ENCODE measurements at regions of chr3 and their contacts with region 1.

Region 1: DNA sequence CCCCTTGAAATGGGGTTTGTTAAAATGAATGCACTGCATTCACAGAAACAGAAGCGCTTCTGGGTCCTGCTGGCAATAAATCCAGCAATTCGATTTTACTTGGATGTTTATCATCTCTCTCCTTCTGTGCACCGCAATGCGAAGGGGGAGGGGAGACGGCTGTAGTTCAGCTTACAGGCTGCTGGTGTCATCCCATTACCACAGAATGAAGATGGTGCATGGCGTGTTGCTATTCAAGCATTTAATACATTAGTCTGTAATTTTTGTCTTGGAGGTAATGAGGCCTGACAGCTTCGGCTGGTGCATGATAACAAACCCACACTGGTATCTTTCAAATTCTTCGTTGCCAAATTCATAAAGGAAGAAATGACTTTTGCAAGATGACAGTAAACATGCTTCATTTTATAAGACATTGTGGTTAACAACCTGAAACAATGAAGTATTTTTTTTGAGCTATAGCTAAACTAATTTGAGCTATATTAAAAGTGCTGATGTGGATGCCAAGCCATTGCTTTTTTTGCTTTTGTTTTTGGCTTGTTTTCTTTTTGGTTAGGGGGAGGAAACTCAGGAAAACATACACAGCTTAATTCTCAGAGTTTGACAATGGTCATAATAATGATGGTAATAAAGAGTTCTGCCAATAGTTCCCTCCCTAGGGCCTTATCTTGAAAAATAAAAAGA is 418.3 kb downstream of the OTOL1 start:
- DNase-seq: peak; percentile 77
- ATAC-seq: peak; percentile 82
- H3K4me3 ChIP-seq: peak overlapping the region; percentile 27; the same call in 1 of the 2 replicates
- H3K27ac ChIP-seq: peak overlapping the region; percentile 74
- H3K4me1 ChIP-seq: peaks cover 30% of the 10 kb centered on the region
- H3K27me3 ChIP-seq: no peaks in the 10 kb centered on the region
- CTCF ChIP-seq: peak; percentile 79

Region 2: DNA sequence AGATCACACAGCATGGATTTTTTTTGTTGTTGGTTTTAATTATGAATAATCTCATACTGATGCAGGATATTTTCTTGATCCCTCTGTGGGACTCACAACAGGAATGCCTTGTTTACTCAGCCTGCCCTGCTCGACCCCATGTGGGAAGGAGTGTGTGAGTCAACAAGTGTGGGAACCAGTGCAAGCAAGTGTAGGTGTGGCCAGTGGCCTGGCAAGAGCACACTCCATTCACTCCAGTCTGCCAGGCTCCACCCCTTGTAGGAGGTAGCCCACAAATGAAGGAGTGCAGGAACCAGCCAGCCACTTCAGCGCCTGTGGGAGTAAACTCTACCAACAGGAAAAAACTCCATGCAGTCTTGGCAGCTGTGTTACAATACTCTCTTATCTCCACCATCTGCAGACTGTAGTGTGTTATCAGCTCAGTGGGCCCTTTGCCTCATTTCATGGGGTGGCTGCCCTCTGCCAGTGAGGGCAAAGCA is 24.7 kb before region 1 on chr3:
- CTCF ChIA-PET with region 1: no interaction called
- POLR2A ChIA-PET with region 1: no interaction called
- intact Hi-C with region 1: loop called (anchors 1 kb)
- DNase-seq: peak; percentile 98
- ATAC-seq: peak; percentile 100
- H3K4me3 ChIP-seq: no peak overlapping the region
- H3K27ac ChIP-seq: peak overlapping the region; percentile 92
- H3K4me1 ChIP-seq: peaks cover 25% of the 10 kb centered on the region
- H3K27me3 ChIP-seq: no peaks in the 10 kb centered on the region
- CTCF ChIP-seq: no peak

Region 3: GRCh38 chr3:161991901-161992540 is 77.1 kb after region 1 on chr3:
- CTCF ChIA-PET with region 1: no interaction called
- POLR2A ChIA-PET with region 1: no interaction called
- intact Hi-C with region 1: no loop called
- DNase-seq: peak; percentile 56
- ATAC-seq: no peak
- H3K4me3 ChIP-seq: no peak overlapping the region
- H3K27ac ChIP-seq: peak overlapping the region; percentile 27
- H3K4me1 ChIP-seq: peaks cover 24% of the 10 kb centered on the region
- H3K27me3 ChIP-seq: no peaks in the 10 kb centered on the region
- CTCF ChIP-seq: no peak

Region 4: DNA sequence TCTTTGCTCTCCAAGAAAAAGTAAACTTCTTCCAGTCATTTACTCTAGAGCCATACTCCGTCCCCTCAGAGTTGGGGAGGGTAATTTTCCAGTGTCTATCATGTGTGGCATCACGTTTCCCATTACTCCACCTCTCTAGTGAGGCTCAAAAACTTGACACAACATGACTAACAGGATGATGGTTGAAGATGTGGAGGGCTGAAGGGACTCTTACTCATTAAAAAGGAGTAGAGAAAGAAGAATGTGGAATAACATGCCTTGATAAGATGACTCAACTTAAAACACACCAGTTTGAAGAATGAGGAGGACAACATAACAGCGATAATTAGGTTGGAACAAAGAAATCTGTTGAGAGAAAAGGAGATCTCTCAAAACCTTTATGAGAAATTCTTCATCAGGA is 476.0 kb after region 1 on chr3:
- CTCF ChIA-PET with region 1: no interaction called
- POLR2A ChIA-PET with region 1: no interaction called
- intact Hi-C with region 1: loop called (anchors 10 kb)
- DNase-seq: peak; percentile 94
- ATAC-seq: peak; percentile 94
- H3K4me3 ChIP-seq: peak overlapping the region; percentile 45
- H3K27ac ChIP-seq: peak overlapping the region; percentile 95
- H3K4me1 ChIP-seq: peaks cover 25% of the 10 kb centered on the region
- H3K27me3 ChIP-seq: no peaks in the 10 kb centered on the region
- CTCF ChIP-seq: no peak

Region 5: GRCh38 chr3:162586591-162586990 is 671.7 kb after region 1 on chr3:
- CTCF ChIA-PET with region 1: no interaction called
- POLR2A ChIA-PET with region 1: no interaction called
- intact Hi-C with region 1: loop called (anchors 10 kb)
- DNase-seq: peak; percentile 80
- ATAC-seq: peak; percentile 90
- H3K4me3 ChIP-seq: no peak overlapping the region
- H3K27ac ChIP-seq: no peak overlapping the region
- H3K4me1 ChIP-seq: peaks cover 6% of the 10 kb centered on the region; the same call in 1 of the 2 replicates
- H3K27me3 ChIP-seq: no peaks in the 10 kb centered on the region
- CTCF ChIP-seq: no peak

Region 6: DNA sequence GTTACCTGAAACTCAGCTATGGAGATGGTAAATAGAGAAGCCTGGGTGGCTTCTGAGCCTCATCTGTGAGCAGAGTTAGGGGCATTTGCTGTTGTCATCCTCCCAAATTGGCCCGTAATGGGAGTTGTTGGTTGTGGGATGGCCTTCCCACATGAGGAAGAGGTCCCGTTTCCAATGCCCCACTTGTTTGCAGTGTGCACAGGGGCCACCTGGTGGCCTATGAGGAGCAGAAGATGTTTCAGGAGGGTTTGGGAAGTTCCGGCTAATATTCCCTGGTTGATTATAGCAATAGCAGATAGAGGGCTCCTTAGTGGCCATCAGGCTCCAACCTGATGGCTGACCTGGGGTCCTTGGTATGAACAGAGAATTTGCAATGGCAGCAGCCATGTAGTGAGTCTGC is 1128.2 kb after region 1 on chr3:
- CTCF ChIA-PET with region 1: no interaction called
- POLR2A ChIA-PET with region 1: no interaction called
- intact Hi-C with region 1: loop called (anchors 5 kb)
- DNase-seq: peak; percentile 62
- ATAC-seq: peak; percentile 76
- H3K4me3 ChIP-seq: no peak overlapping the region
- H3K27ac ChIP-seq: no peak overlapping the region
- H3K4me1 ChIP-seq: no peaks in the 10 kb centered on the region
- H3K27me3 ChIP-seq: no peaks in the 10 kb centered on the region
- CTCF ChIP-seq: peak; percentile 81